GM12878 (cell line): ENCODE measurements at regions of chr9 and their contacts with region 1.

Region 1: GRCh38 chr9:117782931-117783788 is 79.0 kb downstream of the TLR4 start:
- DNase-seq: peak; percentile 31
- ATAC-seq: peak; percentile 91
- H3K4me3 ChIP-seq: no peak overlapping the region; the same call in 1 of the 2 replicates
- H3K27ac ChIP-seq: no peak overlapping the region
- H3K4me1 ChIP-seq: peaks cover 6% of the 10 kb centered on the region
- H3K27me3 ChIP-seq: no peaks in the 10 kb centered on the region
- CTCF ChIP-seq: peak; percentile 72 to 82 (median 78)
- EP300 ChIP-seq: peak in 1 of 2 experiments; percentile 5; a peak in 1 of 4 replicates
- POLR2A ChIP-seq: no peak
- RAD21 ChIP-seq: peak; percentile 80

Region 2: GRCh38 chr9:117869287-117869686 is 86.1 kb after region 1 on chr9:
- CTCF ChIA-PET with region 1: no interaction called
- POLR2A ChIA-PET with region 1: no interaction called
- RAD21 ChIA-PET with region 1: no interaction called
- SMC1A ChIA-PET with region 1: no interaction called
- in situ Hi-C with region 1: no loop called
- intact Hi-C with region 1: loop called (anchors 1 kb)
- DNase-seq: no peak
- ATAC-seq: 0 out of 3 replicates have a peak, but pooled peaks have one; percentile 31
- H3K4me3 ChIP-seq: no peak overlapping the region
- H3K27ac ChIP-seq: no peak overlapping the region
- H3K4me1 ChIP-seq: no peaks in the 10 kb centered on the region
- H3K27me3 ChIP-seq: no peaks in the 10 kb centered on the region; a peak in 1 of 4 replicates
- CTCF ChIP-seq: peak in 1 of 3 experiments; percentile 28; a peak in 1 of 6 replicates
- EP300 ChIP-seq: no peak
- POLR2A ChIP-seq: no peak
- RAD21 ChIP-seq: no peak

Region 3: GRCh38 chr9:118170032-118170955 is 387.1 kb after region 1 on chr9:
- CTCF ChIA-PET with region 1: no interaction called
- POLR2A ChIA-PET with region 1: no interaction called
- RAD21 ChIA-PET with region 1: no interaction called
- SMC1A ChIA-PET with region 1: no interaction called
- in situ Hi-C with region 1: no loop called
- intact Hi-C with region 1: loop called (anchors 5 kb)
- DNase-seq: no peak
- ATAC-seq: peak; percentile 68
- H3K4me3 ChIP-seq: no peak overlapping the region
- H3K27ac ChIP-seq: no peak overlapping the region
- H3K4me1 ChIP-seq: no peaks in the 10 kb centered on the region
- H3K27me3 ChIP-seq: no peaks in the 10 kb centered on the region
- CTCF ChIP-seq: peak; percentile 50 to 65 (median 63)
- EP300 ChIP-seq: no peak
- POLR2A ChIP-seq: no peak
- RAD21 ChIP-seq: peak; percentile 46

Region 4: DNA sequence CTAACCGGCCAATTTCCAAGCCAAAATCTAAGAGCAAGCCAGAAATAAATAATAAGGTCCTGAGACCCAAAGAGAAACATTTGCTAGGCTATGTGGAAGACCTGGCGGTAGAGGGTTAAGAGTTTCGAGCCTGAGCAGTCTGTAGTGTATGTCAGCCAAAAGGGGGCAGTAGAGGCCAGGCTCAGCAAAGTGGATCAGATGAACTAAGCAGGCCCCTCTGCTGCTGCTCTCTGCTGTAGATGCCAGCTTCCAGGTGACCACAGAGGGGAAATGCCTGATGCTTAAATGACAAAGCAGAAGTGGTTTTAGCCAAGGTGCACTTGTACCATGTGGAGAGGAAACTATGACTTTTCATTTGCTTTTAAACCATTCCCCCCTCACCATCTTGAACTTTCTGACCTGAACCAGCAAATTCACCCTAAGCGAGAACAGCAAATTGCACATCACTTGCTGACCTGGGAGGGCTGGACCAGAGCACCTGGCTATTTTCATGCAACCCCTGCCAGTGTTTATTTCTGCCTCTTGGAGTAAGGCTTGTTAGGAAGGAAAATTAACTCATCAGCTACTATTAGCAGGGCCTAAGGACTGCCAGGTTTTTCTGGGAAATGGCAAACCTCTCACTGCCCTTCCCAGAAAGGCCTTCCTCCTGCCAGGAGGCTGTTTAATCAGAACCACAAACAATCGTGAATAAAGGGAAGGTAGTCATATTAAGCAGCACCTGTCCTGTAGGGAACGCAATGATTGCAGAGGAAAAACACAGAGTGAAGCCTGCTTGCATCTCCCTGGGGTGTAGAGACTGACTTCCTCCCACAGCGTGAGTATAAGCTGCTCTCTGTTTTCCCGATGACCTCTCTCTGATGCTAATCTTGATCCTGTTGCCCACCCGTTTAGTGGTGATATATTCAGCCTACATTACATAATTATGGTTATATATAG is 739.2 kb after region 1 on chr9:
- CTCF ChIA-PET with region 1: interaction called, 4 read pairs
- POLR2A ChIA-PET with region 1: no interaction called
- RAD21 ChIA-PET with region 1: no interaction called
- SMC1A ChIA-PET with region 1: no interaction called
- in situ Hi-C with region 1: no loop called
- intact Hi-C with region 1: loop called (anchors 5 kb)
- DNase-seq: peak; percentile 34
- ATAC-seq: peak; percentile 100
- H3K4me3 ChIP-seq: no peak overlapping the region
- H3K27ac ChIP-seq: no peak overlapping the region
- H3K4me1 ChIP-seq: no peaks in the 10 kb centered on the region
- H3K27me3 ChIP-seq: no peaks in the 10 kb centered on the region
- CTCF ChIP-seq: peak; percentile 63 to 84 (median 71)
- EP300 ChIP-seq: no peak
- POLR2A ChIP-seq: no peak
- RAD21 ChIP-seq: peak; percentile 73

Region 5: GRCh38 chr9:119289740-119290433 is 1506.7 kb after region 1 on chr9:
- CTCF ChIA-PET with region 1: no interaction called
- POLR2A ChIA-PET with region 1: no interaction called
- RAD21 ChIA-PET with region 1: no interaction called
- SMC1A ChIA-PET with region 1: no interaction called
- in situ Hi-C with region 1: loop called (anchors 10 kb)
- intact Hi-C with region 1: loop called (anchors 1 kb)
- DNase-seq: no peak
- ATAC-seq: peak; percentile 84
- H3K4me3 ChIP-seq: no peak overlapping the region
- H3K27ac ChIP-seq: no peak overlapping the region
- H3K4me1 ChIP-seq: no peaks in the 10 kb centered on the region
- H3K27me3 ChIP-seq: no peaks in the 10 kb centered on the region
- CTCF ChIP-seq: peak; percentile 68 to 79 (median 74); a peak in 5 of 6 replicates
- EP300 ChIP-seq: no peak
- POLR2A ChIP-seq: no peak
- RAD21 ChIP-seq: peak; percentile 77

Region 6: DNA sequence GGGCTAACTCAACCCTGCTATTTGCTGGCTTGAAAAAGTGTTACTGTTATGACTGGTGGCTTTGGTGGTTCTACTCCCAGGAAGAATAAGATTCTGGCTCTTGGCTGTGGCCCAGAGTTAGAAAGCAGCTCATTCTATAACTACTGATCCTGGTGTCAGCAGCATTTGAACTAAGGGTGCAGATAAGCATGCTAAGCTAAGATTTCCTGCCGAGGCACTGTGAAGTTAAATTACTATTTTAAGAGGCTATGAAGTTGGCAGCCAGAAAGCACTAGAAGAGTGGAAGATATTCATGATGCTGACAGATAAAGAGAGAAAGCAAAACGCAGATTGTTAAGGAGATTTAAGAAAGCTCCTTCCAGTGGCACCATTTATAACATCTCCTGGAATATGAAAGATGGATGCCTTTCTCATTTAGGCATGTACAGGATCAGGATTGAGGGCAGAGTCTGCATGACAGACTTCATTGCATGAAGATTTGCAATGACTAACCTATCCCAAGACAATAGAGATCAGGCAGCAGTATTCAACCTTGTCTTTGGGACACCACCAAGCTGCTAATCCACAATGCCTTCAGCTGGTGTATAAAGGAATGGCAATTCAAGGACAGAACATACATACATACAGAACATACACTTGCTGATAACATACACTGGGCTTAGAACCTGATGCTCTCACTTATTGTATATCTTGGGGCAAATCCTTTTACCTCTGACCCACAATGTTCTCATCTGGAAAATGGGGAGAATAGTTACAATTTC is 1574.4 kb after region 1 on chr9:
- CTCF ChIA-PET with region 1: no interaction called
- POLR2A ChIA-PET with region 1: no interaction called
- RAD21 ChIA-PET with region 1: no interaction called
- SMC1A ChIA-PET with region 1: no interaction called
- in situ Hi-C with region 1: no loop called
- intact Hi-C with region 1: loop called (anchors 5 kb)
- DNase-seq: no peak
- ATAC-seq: no peak
- H3K4me3 ChIP-seq: no peak overlapping the region
- H3K27ac ChIP-seq: no peak overlapping the region
- H3K4me1 ChIP-seq: no peaks in the 10 kb centered on the region
- H3K27me3 ChIP-seq: no peaks in the 10 kb centered on the region
- CTCF ChIP-seq: no peak
- EP300 ChIP-seq: no peak
- POLR2A ChIP-seq: no peak
- RAD21 ChIP-seq: no peak